ENCODE measurements at regions of chr3 and their contacts with region 1.

Region 1: DNA sequence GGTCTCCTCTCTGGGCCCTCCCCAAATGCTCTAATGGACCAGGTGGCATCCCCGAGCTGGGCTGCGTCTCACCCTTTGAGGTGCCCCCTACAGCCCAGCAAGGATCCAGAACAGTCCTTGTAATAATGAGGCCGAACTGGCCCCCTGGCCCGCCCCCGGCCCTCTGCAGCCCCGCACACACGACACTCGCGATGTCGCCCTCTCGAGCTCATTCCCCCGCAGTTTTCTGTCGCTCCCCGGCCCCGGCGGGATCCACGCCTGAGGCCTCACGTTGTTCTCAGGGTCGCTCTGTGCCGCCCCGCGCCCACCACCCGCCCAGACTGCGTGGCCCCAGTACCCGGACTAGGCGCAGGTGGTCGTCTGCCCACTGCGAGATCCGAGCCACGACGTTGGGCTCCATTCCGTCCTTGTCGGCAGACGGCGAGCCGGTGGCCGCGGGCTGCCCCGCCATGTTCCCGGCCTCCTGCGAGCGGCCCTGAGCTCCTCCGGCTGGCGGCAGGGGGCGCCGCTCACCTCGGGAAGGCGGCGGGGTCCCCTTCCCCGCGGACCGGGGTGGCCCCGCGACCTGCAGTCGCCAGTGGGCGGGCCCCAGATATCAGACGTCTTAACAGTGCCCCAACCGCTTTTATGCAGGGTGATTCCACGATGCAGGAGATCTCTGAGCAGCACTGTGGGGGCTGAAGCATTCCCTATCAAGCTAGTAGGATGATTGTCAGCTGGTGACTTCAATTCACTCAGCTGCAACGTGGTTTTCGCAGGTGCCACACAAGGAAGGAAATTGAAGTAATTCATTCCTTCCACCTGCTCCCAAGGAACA is at the start of gene C3orf33:
- DNase-seq: peak; percentile 46 to 96 (median 71)

Region 2: DNA sequence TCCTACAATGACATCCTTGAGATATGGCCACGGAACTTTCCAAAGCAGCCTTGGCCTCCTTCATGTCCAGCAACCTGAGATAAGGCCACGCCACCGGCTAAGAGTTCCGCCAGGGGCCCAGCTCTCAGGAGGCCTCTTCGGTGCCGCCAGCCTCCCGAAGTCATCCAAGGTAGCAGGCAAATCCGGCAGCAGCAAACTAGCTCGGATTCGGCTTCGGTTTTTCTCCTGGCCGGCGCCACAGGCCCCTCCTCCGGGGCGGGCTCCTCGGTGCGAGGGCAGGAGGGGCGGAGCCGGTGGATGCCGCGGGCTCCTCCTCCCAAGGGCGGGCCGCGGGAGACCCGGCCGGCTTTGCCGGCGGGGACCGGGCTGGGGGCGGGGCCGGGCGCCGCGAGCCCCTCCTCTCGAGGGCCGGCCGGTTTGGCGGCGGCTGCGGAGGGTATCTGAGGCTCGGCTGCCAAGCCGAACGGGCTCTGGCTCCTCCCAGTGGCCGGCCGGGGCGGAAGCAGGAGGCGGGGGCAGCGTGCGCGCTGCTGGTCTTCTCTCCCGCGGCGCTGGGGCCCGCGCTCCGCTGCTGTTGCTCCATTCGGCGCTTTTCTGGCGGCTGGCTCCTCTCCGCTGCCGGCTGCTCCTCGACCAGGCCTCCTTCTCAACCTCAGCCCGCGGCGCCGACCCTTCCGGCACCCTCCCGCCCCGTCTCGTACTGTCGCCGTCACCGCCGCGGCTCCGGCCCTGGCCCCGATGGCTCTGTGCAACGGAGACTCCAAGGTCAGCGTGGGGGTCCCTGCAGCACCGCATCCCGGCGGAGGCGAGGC is 64.3 kb after region 1 on chr3 and contains the start of gene GMPS:
- intact Hi-C with region 1: loop called (anchors 5 kb)
- DNase-seq: peak; percentile 85 to 99 (median 94)

Measured in posterior cingulate gyrus (tissue), 11 donors.